ENCODE measurements at regions of chr6 and their contacts with region 1.

Region 1: GRCh38 chr6:1297746-1298145 is 14.2 kb upstream of the FOXQ1 start:
- DNase-seq: no peak
- ATAC-seq: no peak
- H3K4me3 ChIP-seq: no peak overlapping the region
- H3K27ac ChIP-seq: no peak overlapping the region
- H3K4me1 ChIP-seq: no peaks in the 10 kb centered on the region
- H3K27me3 ChIP-seq: peaks cover 0 to 17% (median 3%) of the 10 kb centered on the region in 3 donors
- CTCF ChIP-seq: no peak

Region 2: DNA sequence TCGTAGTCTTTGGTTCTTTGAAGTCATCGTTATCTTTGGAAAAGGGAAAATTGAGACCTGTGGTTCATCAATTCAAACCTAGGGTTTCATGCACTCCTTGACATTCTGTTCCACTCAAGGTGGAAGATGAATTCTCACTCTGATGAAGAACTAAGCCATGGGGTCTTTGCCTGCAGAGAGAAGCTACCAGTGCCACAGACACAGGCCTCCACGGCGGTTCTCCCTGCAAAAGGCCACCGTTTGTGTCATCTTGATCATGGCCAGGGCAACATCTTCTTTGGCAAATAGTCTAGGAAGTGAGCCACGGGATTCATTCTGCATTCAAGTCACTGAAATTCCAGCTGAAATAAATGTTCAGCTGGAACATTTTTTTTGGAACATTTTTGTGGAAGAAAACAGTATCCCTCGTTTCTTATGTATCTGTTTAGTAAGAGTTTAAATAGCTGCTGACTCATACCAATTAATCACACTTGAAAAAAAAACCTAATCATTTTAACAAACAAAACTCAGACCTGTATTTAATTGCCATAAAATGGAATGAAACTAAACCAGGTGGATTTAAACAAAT is 191.8 kb before region 1 on chr6:
- intact Hi-C with region 1: loop called in 1 of 2 experiments (anchors 5 kb)
- DNase-seq: no peak
- ATAC-seq: no peak
- H3K4me3 ChIP-seq: no peak overlapping the region
- H3K27ac ChIP-seq: no peak overlapping the region
- H3K4me1 ChIP-seq: no peaks in the 10 kb centered on the region
- H3K27me3 ChIP-seq: peaks cover 0 to 4% (median 2%) of the 10 kb centered on the region in 3 donors
- CTCF ChIP-seq: no peak

Measured in psoas muscle (tissue), 8 donors.